Left cardiac atrium (tissue), 4 donors: ENCODE measurements at regions of chr7 and their contacts with region 1.

Region 1: DNA sequence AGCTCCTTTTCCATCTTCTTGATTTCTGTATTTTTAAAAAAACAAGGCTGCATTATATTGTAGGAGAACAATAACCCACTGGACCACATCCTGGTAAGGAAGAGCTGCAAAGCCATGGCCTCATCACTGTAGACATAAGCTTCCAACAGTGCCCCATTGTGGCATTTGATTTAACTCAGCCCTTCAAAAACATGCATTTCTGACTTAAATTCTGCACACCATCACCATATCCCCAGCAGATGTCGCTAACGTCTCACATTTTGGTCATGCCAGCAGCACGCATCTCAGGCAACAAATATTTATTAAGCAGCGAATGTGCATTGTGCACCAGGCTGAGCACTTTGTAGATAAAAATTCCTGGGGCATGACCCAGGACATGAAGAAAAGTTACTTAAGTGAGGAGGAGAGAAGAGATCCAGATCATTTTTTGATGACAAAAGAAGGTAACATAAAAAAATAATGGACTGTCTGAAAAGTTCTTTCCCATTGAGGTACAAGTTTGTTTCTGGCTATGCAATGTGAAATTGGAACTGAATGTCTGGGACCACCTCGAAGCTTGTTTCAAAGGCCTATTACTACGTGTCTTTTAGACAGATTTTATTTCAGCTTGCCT is 164.6 kb upstream of the CDCA7L start:
- DNase-seq: peak; percentile 45
- ATAC-seq: peak; percentile 74 to 82

Region 2: GRCh38 chr7:22295402-22296264 is 185.3 kb after region 1 on chr7:
- intact Hi-C with region 1: loop called (anchors 5 to 10 kb)
- DNase-seq: no peak
- ATAC-seq: peak in 1 of 2 donors; percentile 58

Region 3: DNA sequence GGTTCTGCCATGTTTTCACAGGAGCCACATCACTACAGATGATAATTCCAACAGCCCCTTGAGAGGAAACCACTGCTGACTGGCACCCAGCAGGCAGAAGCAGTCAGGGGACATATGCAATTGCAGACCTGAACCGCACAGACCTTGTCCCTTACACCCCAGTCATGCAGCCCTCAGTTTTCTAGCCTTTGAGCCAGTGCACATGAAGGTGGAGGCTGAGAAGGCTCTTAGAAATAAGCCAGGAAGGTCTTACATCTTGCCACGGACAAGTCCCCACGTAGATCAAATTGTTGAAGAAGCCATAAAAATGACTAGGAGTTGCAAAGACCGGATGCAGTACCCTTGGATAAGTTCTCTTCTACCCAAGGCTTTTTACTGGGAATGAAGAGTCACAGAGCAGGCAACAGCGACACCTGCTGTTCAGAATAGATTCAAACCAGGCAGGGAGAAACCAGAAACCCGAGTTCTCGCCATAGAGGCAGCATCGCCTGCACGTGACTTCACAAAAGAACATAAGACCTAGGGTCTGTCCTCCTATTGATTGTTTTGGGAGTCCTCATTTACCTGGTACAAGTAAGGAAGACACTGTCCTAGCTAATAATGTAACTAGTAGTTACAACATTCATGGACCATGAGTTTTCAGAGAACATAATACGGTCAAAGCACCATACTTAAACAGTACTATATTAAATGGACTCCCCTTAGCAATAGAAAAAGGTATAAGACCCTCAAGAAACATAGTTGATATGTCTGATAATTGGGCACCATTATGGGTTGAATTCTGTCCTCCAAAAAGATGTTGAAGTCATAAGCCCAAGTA is 378.5 kb after region 1 on chr7:
- intact Hi-C with region 1: loop called (anchors 2 to 5 kb)
- DNase-seq: peak; percentile 64
- ATAC-seq: peak; percentile 79 to 86